ENCODE measurements at regions of chr22 and their contacts with region 1.

Region 1: GRCh38 chr22:36301384-36301828 is 48.5 kb downstream of the APOL1 start:
- DNase-seq: peak; percentile 73
- ATAC-seq: peak; percentile 43
- H3K4me3 ChIP-seq: no peak overlapping the region
- H3K27ac ChIP-seq: peak overlapping the region; percentile 94
- H3K4me1 ChIP-seq: peaks cover 21% of the 10 kb centered on the region
- H3K27me3 ChIP-seq: no peaks in the 10 kb centered on the region
- CTCF ChIP-seq: peak; percentile 75
- POLR2A ChIP-seq: peak; percentile 46
- RAD21 ChIP-seq: peak; percentile 69

Region 2: DNA sequence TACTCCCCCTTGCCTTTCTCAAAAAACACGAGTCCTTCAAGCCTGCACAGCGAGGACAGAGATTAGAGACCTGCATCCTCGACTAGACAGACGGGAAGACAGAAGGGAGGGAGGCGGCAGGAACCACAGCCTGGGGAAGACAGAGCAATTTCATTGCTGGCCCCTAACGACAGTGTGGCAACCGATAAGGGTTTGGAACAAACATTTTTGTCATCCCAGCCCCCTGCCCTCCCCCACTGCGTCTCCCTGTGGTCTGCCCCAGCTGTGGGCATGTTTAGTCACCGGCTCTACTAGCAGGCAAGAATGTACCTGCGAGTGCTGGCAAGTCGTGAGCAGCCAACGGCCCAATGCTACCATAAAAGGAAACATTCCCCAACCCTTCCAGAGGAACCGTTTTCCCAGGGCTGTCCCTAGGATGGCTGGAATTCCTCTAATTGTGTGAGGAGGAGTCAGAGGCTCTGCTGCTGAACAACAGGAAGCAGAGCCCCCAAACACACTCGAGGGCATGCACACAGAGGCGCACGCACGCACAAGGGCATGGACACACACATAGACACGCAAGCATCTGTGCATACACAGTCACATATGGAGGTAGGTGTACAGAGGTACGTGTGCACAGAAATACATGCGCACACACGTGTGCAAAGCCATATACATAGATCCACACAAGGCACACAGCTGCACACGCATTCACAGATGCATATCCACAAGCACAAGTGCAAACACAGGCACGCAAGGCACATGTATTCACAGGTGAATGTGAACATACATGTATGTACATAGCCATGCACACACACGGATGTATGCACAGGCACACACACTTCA is 28.1 kb after region 1 on chr22:
- CTCF ChIA-PET with region 1: no interaction called
- POLR2A ChIA-PET with region 1: interaction called, 3 read pairs
- dilution Hi-C with region 1: no loop called
- in situ Hi-C with region 1: no loop called
- intact Hi-C with region 1: loop called (anchors 1 kb)
- DNase-seq: peak; percentile 97
- ATAC-seq: peak; percentile 50
- H3K4me3 ChIP-seq: no peak overlapping the region
- H3K27ac ChIP-seq: peak overlapping the region; percentile 87
- H3K4me1 ChIP-seq: peaks cover 77% of the 10 kb centered on the region
- H3K27me3 ChIP-seq: no peaks in the 10 kb centered on the region
- CTCF ChIP-seq: no peak
- POLR2A ChIP-seq: peak; percentile 14; the same call in 1 of the 2 replicates
- RAD21 ChIP-seq: peak; percentile 22

Region 3: DNA sequence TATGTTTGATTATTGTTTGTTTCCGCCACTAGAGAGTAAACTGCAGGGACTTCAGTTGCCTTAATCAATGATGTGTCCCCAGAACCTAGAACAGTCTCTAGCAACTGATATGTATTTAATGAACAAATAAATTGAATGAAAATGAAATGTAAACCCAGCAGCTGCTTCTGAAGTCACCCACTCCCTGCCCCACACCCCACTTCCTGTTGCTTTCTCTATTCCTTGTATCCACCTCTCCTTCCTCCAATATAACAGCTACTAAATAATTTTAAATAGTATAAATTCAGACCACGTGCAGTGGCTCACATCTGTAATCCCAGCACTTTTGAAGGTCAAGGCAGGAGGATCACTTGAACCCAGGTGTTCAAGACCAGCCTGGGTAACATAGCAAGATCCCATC is 70.5 kb after region 1 on chr22:
- CTCF ChIA-PET with region 1: interaction called, 3 read pairs
- POLR2A ChIA-PET with region 1: interaction called, 11 read pairs
- dilution Hi-C with region 1: no loop called
- in situ Hi-C with region 1: no loop called
- intact Hi-C with region 1: no loop called
- DNase-seq: peak; percentile 11
- ATAC-seq: no peak
- H3K4me3 ChIP-seq: no peak overlapping the region
- H3K27ac ChIP-seq: peak overlapping the region; percentile 20; the same call in 1 of the 2 replicates
- H3K4me1 ChIP-seq: peaks cover 65% of the 10 kb centered on the region
- H3K27me3 ChIP-seq: no peaks in the 10 kb centered on the region
- CTCF ChIP-seq: no peak
- POLR2A ChIP-seq: no peak
- RAD21 ChIP-seq: no peak

Region 4: GRCh38 chr22:36689583-36689982 is 388.2 kb after region 1 on chr22:
- CTCF ChIA-PET with region 1: no interaction called
- POLR2A ChIA-PET with region 1: no interaction called
- dilution Hi-C with region 1: no loop called
- in situ Hi-C with region 1: no loop called
- intact Hi-C with region 1: no loop called
- DNase-seq: no peak
- ATAC-seq: no peak
- H3K4me3 ChIP-seq: no peak overlapping the region
- H3K27ac ChIP-seq: no peak overlapping the region
- H3K4me1 ChIP-seq: no peaks in the 10 kb centered on the region
- H3K27me3 ChIP-seq: peaks cover 38% of the 10 kb centered on the region
- CTCF ChIP-seq: no peak
- POLR2A ChIP-seq: no peak
- RAD21 ChIP-seq: no peak